Left ventricle myocardium inferior (tissue), 1 donor: ENCODE measurements at regions of chr19 and their contacts with region 1.

Region 1: DNA sequence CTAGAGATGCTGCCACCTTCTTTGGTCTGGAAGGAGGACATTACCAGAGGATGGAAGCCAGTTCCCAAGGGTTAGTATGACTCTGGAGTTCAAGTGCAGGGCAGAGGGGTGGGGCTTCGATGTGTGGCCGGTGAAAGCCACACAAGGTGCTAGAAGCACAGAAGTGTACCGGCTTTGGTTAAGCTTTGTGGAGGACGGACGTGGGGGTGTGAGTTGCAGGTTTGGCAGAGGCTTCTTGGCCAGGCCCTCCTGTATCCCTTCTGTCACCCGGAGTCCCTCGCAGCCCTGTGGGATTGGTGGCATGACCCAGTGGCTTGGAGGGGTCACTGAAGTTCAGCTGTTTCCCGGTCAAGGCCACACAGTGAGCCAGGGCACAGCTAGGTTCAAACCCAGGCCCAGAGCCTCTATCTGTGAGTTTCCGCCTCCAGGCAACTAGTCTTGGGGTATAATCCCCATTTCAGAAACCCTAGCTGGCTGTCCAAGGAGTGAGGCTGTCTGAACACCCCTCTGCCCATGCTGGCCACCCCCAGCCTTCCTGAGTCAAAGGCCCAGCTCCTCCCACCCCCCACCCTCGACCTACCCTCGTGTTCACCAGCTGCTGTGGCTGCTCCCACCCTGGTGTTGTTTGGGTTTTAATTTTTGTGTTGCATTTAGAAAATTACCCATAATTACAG is 4.6 kb upstream of the SSBP4 start:
- DNase-seq: peak; percentile 31
- H3K4me3 ChIP-seq: peak overlapping the region; percentile 86
- H3K27ac ChIP-seq: peak overlapping the region; percentile 99
- H3K4me1 ChIP-seq: peaks cover 52% of the 10 kb centered on the region
- H3K27me3 ChIP-seq: peaks cover 46% of the 10 kb centered on the region
- CTCF ChIP-seq: no peak

Region 2: GRCh38 chr19:18349524-18350128 is 65.0 kb before region 1 on chr19:
- intact Hi-C with region 1: loop called (anchors 5 kb)
- DNase-seq: no peak
- H3K4me3 ChIP-seq: no peak overlapping the region
- H3K27ac ChIP-seq: no peak overlapping the region
- H3K4me1 ChIP-seq: no peaks in the 10 kb centered on the region
- H3K27me3 ChIP-seq: no peaks in the 10 kb centered on the region
- CTCF ChIP-seq: peak; percentile 83